ENCODE measurements at regions of chr2 and their contacts with region 1.

Region 1: GRCh38 chr2:202634556-202635427 is at the start of gene FAM117B:
- DNase-seq: peak; percentile 99
- ATAC-seq: peak; percentile 97
- H3K4me3 ChIP-seq: peak within 1 kb of the TSS; percentile 93 to 99
- H3K27ac ChIP-seq: peak within 1 kb of the TSS; percentile 67 to 89
- H3K4me1 ChIP-seq: no peaks in the 10 kb centered on the region
- H3K27me3 ChIP-seq: no peaks in the 10 kb centered on the region
- total RNA-seq, gene FAM117B: 4.3 to 8.4 TPM

Region 2: GRCh38 chr2:202801544-202801943 is 166.8 kb after region 1 on chr2:
- intact Hi-C with region 1: loop called in 1 of 2 experiments (anchors 10 kb)
- DNase-seq: no peak
- ATAC-seq: no peak
- H3K4me3 ChIP-seq: no peak overlapping the region
- H3K27ac ChIP-seq: no peak overlapping the region
- H3K4me1 ChIP-seq: peaks cover 0 to 1% of the 10 kb centered on the region in 2 donors
- H3K27me3 ChIP-seq: no peaks in the 10 kb centered on the region

Measured in aorta (tissue), 5 donors.